ENCODE measurements at regions of chr9 and their contacts with region 1.

Region 1: GRCh38 chr9:107660968-107661367 is 171.4 kb upstream of the KLF4 start:
- DNase-seq: no peak
- H3K4me3 ChIP-seq: no peak overlapping the region
- CTCF ChIP-seq: no peak

Region 2: GRCh38 chr9:107624234-107624960 is 36.6 kb before region 1 on chr9:
- in situ Hi-C with region 1: loop called (anchors 5 kb)
- DNase-seq: no peak
- H3K4me3 ChIP-seq: no peak overlapping the region
- CTCF ChIP-seq: no peak

Region 3: DNA sequence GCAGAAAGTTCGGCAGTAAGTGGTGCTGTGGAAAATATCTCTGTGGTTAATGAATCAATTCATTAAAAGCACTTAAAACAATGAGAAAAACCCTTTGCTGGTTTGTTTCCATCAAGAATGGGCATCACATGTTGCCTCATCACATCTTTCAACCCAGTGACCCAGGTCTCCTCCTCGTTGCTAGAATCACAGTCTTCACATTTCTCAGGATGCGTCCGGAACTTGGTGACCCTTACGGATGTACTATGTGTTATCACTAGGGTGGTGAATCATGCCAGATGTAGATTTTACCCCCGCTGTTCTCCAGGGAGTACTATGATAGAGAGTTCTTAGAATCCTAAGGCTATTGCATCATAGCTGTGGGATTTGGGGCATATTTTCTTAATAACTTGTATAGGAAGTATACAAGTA is 46.5 kb after region 1 on chr9:
- in situ Hi-C with region 1: no loop called
- DNase-seq: peak; percentile 41
- H3K4me3 ChIP-seq: no peak overlapping the region
- CTCF ChIP-seq: no peak

Region 4: GRCh38 chr9:107717529-107718314 is 56.8 kb after region 1 on chr9:
- in situ Hi-C with region 1: no loop called
- DNase-seq: no peak
- H3K4me3 ChIP-seq: no peak overlapping the region
- CTCF ChIP-seq: no peak

Measured in astrocyte of the cerebellum (primary cell).